Spleen (tissue), 13 donors: ENCODE measurements at regions of chr2 and their contacts with region 1.

Region 1: GRCh38 chr2:109545828-109546713 is 67.7 kb downstream of the SEPTIN10 start:
- DNase-seq: no peak
- H3K4me3 ChIP-seq: no peak overlapping the region
- H3K27ac ChIP-seq: no peak overlapping the region
- H3K4me1 ChIP-seq: peaks cover 0 to 6% (median 0%) of the 10 kb centered on the region in 6 donors
- H3K27me3 ChIP-seq: no peaks in the 10 kb centered on the region
- CTCF ChIP-seq: peak; percentile 48 to 85 (median 77)
- POLR2A ChIP-seq: no peak

Region 2: GRCh38 chr2:109062859-109063700 is 483.0 kb before region 1 on chr2:
- intact Hi-C with region 1: no loop called
- DNase-seq: peak; percentile 66
- H3K4me3 ChIP-seq: no peak overlapping the region
- H3K27ac ChIP-seq: no peak overlapping the region
- H3K4me1 ChIP-seq: peaks cover 0 to 6% (median 0%) of the 10 kb centered on the region in 6 donors
- H3K27me3 ChIP-seq: peaks cover 0 to 23% (median 0%) of the 10 kb centered on the region in 7 donors
- CTCF ChIP-seq: no peak
- POLR2A ChIP-seq: no peak

Region 3: DNA sequence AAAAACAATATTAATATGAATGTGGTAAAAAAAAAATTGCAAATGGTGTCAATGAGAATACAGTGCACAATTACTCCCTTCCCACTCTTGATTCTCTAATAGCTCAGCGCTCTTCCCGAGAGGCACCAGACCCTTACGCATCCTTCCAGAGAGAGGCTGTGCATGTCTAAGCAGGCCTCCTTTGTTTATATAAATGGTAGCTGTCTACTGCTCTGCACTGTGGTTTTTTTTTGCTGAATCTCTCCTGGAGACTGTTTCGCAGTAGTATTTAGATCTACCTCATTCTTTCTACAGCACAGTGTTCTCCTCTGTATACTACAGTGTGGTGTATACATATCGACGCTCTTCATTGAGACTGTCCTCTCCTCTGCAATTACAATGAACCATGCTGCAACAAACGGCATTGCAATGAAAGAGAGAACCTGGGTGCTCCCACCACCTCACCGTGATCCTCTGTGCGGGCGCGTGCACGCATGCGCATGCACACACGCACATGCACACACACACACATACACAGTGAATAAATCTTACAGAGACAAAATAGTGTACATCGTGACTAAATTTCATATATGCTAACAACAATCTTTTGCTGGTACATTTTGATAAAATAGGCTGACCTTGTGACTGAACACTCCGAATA is 48.3 kb after region 1 on chr2:
- intact Hi-C with region 1: no loop called
- DNase-seq: no peak
- H3K4me3 ChIP-seq: no peak overlapping the region
- H3K27ac ChIP-seq: no peak overlapping the region
- H3K4me1 ChIP-seq: no peaks in the 10 kb centered on the region
- H3K27me3 ChIP-seq: no peaks in the 10 kb centered on the region
- CTCF ChIP-seq: no peak
- POLR2A ChIP-seq: no peak

Region 4: GRCh38 chr2:109702618-109702985 is 156.5 kb after region 1 on chr2:
- intact Hi-C with region 1: no loop called
- DNase-seq: no peak
- H3K4me3 ChIP-seq: no peak overlapping the region
- H3K27ac ChIP-seq: peak overlapping the region in 1 of 8 donors; percentile 3
- H3K4me1 ChIP-seq: peaks cover 0 to 38% (median 13%) of the 10 kb centered on the region in 6 donors
- H3K27me3 ChIP-seq: no peaks in the 10 kb centered on the region
- CTCF ChIP-seq: no peak
- POLR2A ChIP-seq: no peak

Region 5: GRCh38 chr2:109715313-109715805 is 169.3 kb after region 1 on chr2:
- intact Hi-C with region 1: loop called (anchors 5 kb)
- DNase-seq: peak; percentile 24
- H3K4me3 ChIP-seq: no peak overlapping the region
- H3K27ac ChIP-seq: no peak overlapping the region
- H3K4me1 ChIP-seq: no peaks in the 10 kb centered on the region
- H3K27me3 ChIP-seq: no peaks in the 10 kb centered on the region
- CTCF ChIP-seq: peak in 8 of 11 experiments; percentile 32 to 57 (median 44)
- POLR2A ChIP-seq: no peak